ENCODE measurements at regions of chr1 and their contacts with region 1.

Region 1: DNA sequence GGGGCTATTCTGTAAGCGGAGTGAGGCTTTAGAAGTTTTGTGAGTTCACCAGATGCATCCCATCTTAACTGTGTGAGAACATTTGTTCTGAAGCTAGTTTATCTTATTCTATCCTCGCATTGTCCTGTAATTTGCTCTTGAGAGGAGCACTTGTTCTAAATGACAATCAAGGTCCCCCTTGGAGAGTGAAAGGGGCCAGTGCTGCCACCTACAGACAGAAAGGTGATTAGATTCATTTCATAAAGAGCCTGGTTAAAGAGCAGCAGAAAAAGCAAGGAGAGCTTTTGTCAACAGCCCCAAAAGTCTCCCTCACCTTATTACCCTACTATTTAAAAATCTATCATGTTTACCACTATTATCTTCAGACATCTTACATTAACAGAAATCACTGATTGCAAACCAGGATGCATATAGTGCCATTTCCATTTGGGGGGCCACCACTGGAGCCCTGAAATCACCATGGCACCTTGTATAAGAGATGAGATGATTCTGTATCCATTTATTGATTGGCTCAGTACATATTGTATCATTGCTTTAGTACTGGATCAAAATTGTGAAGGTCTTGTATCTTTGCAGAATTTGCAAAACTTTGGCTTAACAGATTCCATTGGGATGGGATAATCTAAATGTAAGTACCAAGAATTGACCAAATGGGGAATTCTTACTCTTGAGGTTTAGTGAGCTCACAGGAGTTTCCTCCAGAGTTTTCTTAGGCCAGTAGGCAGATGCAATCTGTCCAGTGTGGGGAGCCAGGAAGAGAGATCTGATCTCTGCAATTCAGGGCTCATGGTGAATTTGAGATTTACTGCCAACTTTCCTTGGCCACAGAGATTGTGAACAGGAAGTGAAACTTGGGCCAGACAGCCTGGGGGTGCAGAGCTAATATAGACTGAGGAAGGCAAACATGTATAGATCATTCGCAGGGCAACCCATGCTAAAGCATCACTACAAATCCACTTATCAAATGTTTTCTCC is 64.3 kb upstream of the TRABD2B start:
- DNase-seq: peak; percentile 53 to 67 (median 64)
- ATAC-seq: peak; percentile 86
- H3K4me3 ChIP-seq: no peak overlapping the region
- H3K27ac ChIP-seq: no peak overlapping the region
- H3K4me1 ChIP-seq: no peaks in the 10 kb centered on the region
- H3K27me3 ChIP-seq: no peaks in the 10 kb centered on the region
- CTCF ChIP-seq: peak; percentile 55 to 77 (median 65)
- EP300 ChIP-seq: no peak
- POLR2A ChIP-seq: no peak
- RAD21 ChIP-seq: peak; percentile 64 to 76

Region 2: DNA sequence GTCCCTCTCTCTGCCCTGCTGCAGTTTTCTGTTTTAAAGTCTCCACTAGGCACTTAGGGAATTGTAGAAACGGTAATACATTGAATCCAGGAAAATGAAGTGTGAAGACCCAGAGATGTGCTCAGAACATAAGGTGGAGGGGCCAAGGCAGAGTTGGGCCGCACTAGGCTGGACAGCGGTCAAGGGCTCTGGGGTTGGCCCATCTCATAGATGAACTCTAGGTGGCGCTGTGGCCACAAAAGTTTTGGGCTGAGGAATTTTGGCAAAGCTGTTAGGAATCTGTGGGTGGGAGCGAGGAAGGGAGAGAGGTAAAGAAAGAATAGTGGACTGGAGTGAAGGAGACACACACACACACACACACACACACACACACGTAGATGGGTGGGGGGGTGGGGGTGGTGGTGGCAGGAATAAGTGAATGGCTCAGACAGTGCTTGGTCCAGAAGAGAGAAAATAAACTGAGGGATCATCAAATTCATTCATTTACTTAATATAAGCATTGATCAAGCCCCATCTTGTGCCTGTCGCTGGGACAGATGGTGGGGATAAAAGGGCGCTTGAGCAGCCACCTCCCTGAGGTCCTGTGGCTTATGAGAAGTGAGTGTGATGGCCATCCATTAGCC is 322.8 kb before region 1 on chr1:
- CTCF ChIA-PET with region 1: interaction called, 4 read pairs
- POLR2A ChIA-PET with region 1: no interaction called
- in situ Hi-C with region 1: no loop called
- intact Hi-C with region 1: loop called (anchors 1 kb)
- DNase-seq: peak; percentile 59 to 80 (median 74)
- ATAC-seq: peak; percentile 97
- H3K4me3 ChIP-seq: no peak overlapping the region
- H3K27ac ChIP-seq: no peak overlapping the region
- H3K4me1 ChIP-seq: no peaks in the 10 kb centered on the region
- H3K27me3 ChIP-seq: no peaks in the 10 kb centered on the region
- CTCF ChIP-seq: peak; percentile 77 to 81 (median 79)
- EP300 ChIP-seq: no peak
- POLR2A ChIP-seq: no peak
- RAD21 ChIP-seq: peak; percentile 34 to 69

Region 3: DNA sequence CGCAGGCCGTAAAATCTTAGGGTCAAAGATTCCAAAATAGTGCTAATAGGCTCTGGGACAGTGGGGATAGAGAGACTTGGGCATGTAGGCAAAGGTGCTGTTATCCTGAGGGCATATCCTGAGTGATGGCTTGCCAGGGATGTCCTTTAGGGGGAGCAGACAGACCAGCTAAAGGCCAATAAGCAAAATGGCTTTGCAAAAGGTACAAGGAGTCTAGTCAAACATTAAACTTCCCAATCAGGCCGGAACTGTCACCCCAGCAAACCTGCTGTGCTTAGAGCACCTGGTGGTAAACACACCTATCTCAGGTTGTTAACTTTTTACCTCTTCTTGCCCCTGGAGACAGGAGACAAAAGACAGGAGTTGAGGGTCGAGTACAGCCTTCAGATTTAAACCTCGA is 113.3 kb before region 1 on chr1:
- CTCF ChIA-PET with region 1: no interaction called
- POLR2A ChIA-PET with region 1: interaction called, 3 read pairs
- in situ Hi-C with region 1: no loop called
- intact Hi-C with region 1: loop called (anchors 5 kb)
- DNase-seq: peak in 1 of 4 experiments; percentile 10
- ATAC-seq: peak; percentile 49; the same call in 1 of the 3 replicates
- H3K4me3 ChIP-seq: no peak overlapping the region
- H3K27ac ChIP-seq: no peak overlapping the region
- H3K4me1 ChIP-seq: no peaks in the 10 kb centered on the region
- H3K27me3 ChIP-seq: peaks cover 0 to 13% of the 10 kb centered on the region in 2 experiments; a peak in 1 of 5 replicates
- CTCF ChIP-seq: peak; percentile 27 to 44 (median 32); a peak in 3 of 6 replicates
- EP300 ChIP-seq: no peak
- POLR2A ChIP-seq: no peak
- RAD21 ChIP-seq: peak in 1 of 2 experiments; percentile 23; a peak in 2 of 4 replicates

Region 4: GRCh38 chr1:47997289-47998200 is 63.9 kb before region 1 on chr1 and contains the start of gene TRABD2B:
- CTCF ChIA-PET with region 1: interaction called, 29 read pairs
- POLR2A ChIA-PET with region 1: no interaction called
- in situ Hi-C with region 1: no loop called
- intact Hi-C with region 1: loop called (anchors 1 kb)
- DNase-seq: peak; percentile 68 to 91 (median 88)
- ATAC-seq: peak; percentile 98
- H3K4me3 ChIP-seq: no peak within 1 kb of the TSS
- H3K27ac ChIP-seq: no peak within 1 kb of the TSS
- H3K4me1 ChIP-seq: peaks cover 0 to 5% of the 10 kb centered on the region in 2 experiments; a peak in 2 of 5 replicates
- H3K27me3 ChIP-seq: peaks cover 10 to 52% of the 10 kb centered on the region in 2 experiments
- CTCF ChIP-seq: peak; percentile 80 to 90 (median 84)
- EP300 ChIP-seq: no peak
- POLR2A ChIP-seq: no peak
- RAD21 ChIP-seq: peak; percentile 58 to 70
- polyA plus RNA-seq, gene TRABD2B: not detected

Measured in K562 (cell line).